Mammary epithelial cell (primary cell): ENCODE measurements at regions of chr12 and their contacts with region 1.

Region 1: GRCh38 chr12:76348079-76348901 is at the start of gene BBS10:
- DNase-seq: peak; percentile 92
- H3K4me3 ChIP-seq: peak within 1 kb of the TSS; percentile 85 to 93 (median 91)
- H3K27ac ChIP-seq: peak within 1 kb of the TSS; percentile 72
- H3K4me1 ChIP-seq: peaks cover 9% of the 10 kb centered on the region
- H3K27me3 ChIP-seq: no peaks in the 10 kb centered on the region
- CTCF ChIP-seq: peak; percentile 24 to 65
- total RNA-seq, gene BBS10: 7.6 to 10.7 TPM

Region 2: GRCh38 chr12:75533239-75533638 is 815.1 kb before region 1 on chr12:
- CTCF ChIA-PET with region 1: no interaction called
- dilution Hi-C with region 1: no loop called
- in situ Hi-C with region 1: loop called in 1 of 2 experiments (anchors 10 kb)
- intact Hi-C with region 1: no loop called
- DNase-seq: no peak
- H3K4me3 ChIP-seq: no peak overlapping the region
- H3K27ac ChIP-seq: no peak overlapping the region
- H3K4me1 ChIP-seq: no peaks in the 10 kb centered on the region
- H3K27me3 ChIP-seq: no peaks in the 10 kb centered on the region
- CTCF ChIP-seq: no peak

Region 3: DNA sequence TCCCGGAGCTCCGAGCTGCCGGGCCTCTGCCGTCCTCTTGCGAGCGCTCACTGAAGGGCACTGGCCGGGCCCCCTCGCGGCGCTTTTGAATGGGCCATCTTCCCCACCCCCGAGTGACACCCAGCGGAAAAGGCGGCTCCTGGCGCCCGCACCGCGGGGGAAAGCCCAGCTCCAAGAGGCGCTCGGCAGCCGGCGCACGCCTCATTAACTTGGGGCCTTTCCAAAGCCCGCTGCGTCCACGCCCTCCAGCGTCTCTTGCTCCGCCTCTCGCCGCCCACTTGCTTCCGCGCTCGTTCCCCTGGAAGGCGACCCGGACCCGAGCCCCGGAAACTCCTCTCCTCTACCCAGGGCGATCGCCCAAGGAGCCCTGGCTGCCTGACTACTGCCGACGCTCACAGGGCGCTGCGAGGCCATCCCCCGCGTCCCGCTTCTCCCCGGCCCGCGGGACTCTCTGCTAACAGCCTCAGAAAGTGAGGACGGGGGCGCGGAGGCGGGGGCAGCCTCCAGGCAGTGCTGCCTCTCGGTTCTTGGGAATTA is 316.7 kb before region 1 on chr12 and contains the start of gene PHLDA1:
- CTCF ChIA-PET with region 1: no interaction called
- dilution Hi-C with region 1: no loop called
- in situ Hi-C with region 1: no loop called
- intact Hi-C with region 1: loop called (anchors 1 kb)
- DNase-seq: peak; percentile 98
- H3K4me3 ChIP-seq: peak within 1 kb of the TSS; percentile 87 to 96 (median 93)
- H3K27ac ChIP-seq: peak within 1 kb of the TSS; percentile 93
- H3K4me1 ChIP-seq: peaks cover 9% of the 10 kb centered on the region
- H3K27me3 ChIP-seq: no peaks in the 10 kb centered on the region
- CTCF ChIP-seq: peak; percentile 26 to 79
- total RNA-seq, gene PHLDA1: 161 to 545 TPM

Region 4: GRCh38 chr12:76083904-76084862 is 264.1 kb before region 1 on chr12 and contains the start of gene NAP1L1:
- CTCF ChIA-PET with region 1: interaction called, 3 read pairs
- dilution Hi-C with region 1: no loop called
- in situ Hi-C with region 1: loop called (anchors 10 kb)
- intact Hi-C with region 1: loop called (anchors 1 kb)
- DNase-seq: peak; percentile 97
- H3K4me3 ChIP-seq: peak within 1 kb of the TSS; percentile 82 to 98 (median 95)
- H3K27ac ChIP-seq: peak within 1 kb of the TSS; percentile 96
- H3K4me1 ChIP-seq: peaks cover 14% of the 10 kb centered on the region
- H3K27me3 ChIP-seq: no peaks in the 10 kb centered on the region
- CTCF ChIP-seq: no peak
- total RNA-seq, gene NAP1L1: 167 to 381 TPM

Region 5: GRCh38 chr12:76266797-76267196 is 81.5 kb before region 1 on chr12:
- CTCF ChIA-PET with region 1: no interaction called
- dilution Hi-C with region 1: no loop called
- in situ Hi-C with region 1: no loop called
- intact Hi-C with region 1: no loop called
- DNase-seq: peak; percentile 72
- H3K4me3 ChIP-seq: no peak overlapping the region
- H3K27ac ChIP-seq: peak overlapping the region; percentile 32
- H3K4me1 ChIP-seq: peaks cover 32% of the 10 kb centered on the region
- H3K27me3 ChIP-seq: no peaks in the 10 kb centered on the region
- CTCF ChIP-seq: no peak

Region 6: GRCh38 chr12:76455582-76456345 is 107.5 kb after region 1 on chr12:
- CTCF ChIA-PET with region 1: no interaction called
- dilution Hi-C with region 1: no loop called
- in situ Hi-C with region 1: no loop called
- intact Hi-C with region 1: loop called (anchors 1 kb)
- DNase-seq: peak; percentile 89
- H3K4me3 ChIP-seq: no peak overlapping the region
- H3K27ac ChIP-seq: peak overlapping the region; percentile 97
- H3K4me1 ChIP-seq: peaks cover 27% of the 10 kb centered on the region
- H3K27me3 ChIP-seq: no peaks in the 10 kb centered on the region
- CTCF ChIP-seq: peak; percentile 70 to 73

Region 7: GRCh38 chr12:76790564-76791552 is 442.6 kb after region 1 on chr12:
- CTCF ChIA-PET with region 1: no interaction called
- dilution Hi-C with region 1: no loop called
- in situ Hi-C with region 1: no loop called
- intact Hi-C with region 1: no loop called
- DNase-seq: no peak
- H3K4me3 ChIP-seq: no peak overlapping the region
- H3K27ac ChIP-seq: no peak overlapping the region
- H3K4me1 ChIP-seq: no peaks in the 10 kb centered on the region
- H3K27me3 ChIP-seq: no peaks in the 10 kb centered on the region
- CTCF ChIP-seq: peak; percentile 34 to 60